Calu3 (cell line): ENCODE measurements at regions of chr3 and their contacts with region 1.

Region 1: DNA sequence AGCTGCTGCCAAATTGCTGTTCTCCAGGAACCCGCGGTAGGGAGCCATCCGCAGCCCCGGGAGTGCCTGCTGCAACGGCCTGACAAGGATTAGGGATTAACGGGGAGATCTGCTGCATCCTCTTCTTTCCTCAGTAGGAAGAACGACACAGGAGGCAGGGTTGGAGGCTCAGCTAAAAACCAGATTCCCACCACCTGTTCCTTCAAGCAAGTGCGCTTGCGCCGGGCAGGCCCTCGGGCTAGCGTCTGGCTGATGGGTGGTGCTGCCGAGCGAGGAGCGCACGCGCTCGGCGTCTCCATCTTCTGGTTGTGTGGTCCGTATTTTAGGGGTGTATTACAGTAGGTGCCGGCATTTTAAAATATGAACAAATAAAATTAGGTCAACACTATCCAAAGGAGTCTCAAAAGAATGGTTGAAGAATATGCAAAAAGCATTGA is 25.4 kb upstream of the SLC25A26 start:
- DNase-seq: peak; percentile 77
- H3K4me3 Mint-ChIP-seq: peak overlapping the region; percentile 66
- H3K27ac Mint-ChIP-seq: no peak overlapping the region
- H3K4me1 Mint-ChIP-seq: no peaks in the 10 kb centered on the region
- H3K27me3 Mint-ChIP-seq: no peaks in the 10 kb centered on the region
- CTCF ChIP-seq: no peak

Region 2: GRCh38 chr3:65342084-65342683 is 853.2 kb before region 1 on chr3:
- CTCF ChIA-PET with region 1: no interaction called
- intact Hi-C with region 1: loop called (anchors 1 kb)
- DNase-seq: peak; percentile 72
- H3K4me3 Mint-ChIP-seq: no peak overlapping the region
- H3K27ac Mint-ChIP-seq: no peak overlapping the region
- H3K4me1 Mint-ChIP-seq: no peaks in the 10 kb centered on the region
- H3K27me3 Mint-ChIP-seq: no peaks in the 10 kb centered on the region
- CTCF ChIP-seq: peak; percentile 75

Region 3: DNA sequence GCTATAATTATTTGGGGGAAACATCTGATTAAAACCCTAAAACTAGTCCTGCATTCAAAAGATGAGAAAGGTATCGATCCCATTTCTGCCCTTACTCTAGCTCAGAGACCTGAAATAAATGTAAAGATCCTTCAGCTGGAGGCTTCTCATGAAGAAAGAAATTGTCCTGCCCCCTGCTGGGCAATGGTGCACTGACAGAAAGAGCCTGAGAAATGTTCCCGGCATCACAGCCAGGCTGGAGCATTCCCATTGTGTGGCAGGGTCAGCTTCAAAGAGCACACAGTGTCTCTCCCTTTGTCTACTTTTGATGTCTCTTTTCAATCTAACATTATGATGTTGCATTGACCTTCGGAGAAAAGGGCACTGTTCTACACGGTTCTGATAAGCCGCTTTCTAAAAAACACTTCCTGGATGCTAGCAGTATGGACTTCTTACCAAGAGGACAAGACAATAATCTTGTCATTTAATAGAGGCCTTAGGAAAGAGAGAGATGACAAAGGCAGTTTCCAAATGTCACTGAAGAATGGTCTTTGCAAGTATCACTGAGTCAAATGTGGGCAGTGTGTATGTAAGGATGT is 444.2 kb before region 1 on chr3:
- CTCF ChIA-PET with region 1: interaction called, 3 read pairs
- intact Hi-C with region 1: loop called (anchors 10 kb)
- DNase-seq: peak; percentile 61
- H3K4me3 Mint-ChIP-seq: no peak overlapping the region
- H3K27ac Mint-ChIP-seq: no peak overlapping the region
- H3K4me1 Mint-ChIP-seq: no peaks in the 10 kb centered on the region
- H3K27me3 Mint-ChIP-seq: no peaks in the 10 kb centered on the region
- CTCF ChIP-seq: peak; percentile 71

Region 4: GRCh38 chr3:65927549-65927948 is 267.8 kb before region 1 on chr3:
- CTCF ChIA-PET with region 1: no interaction called
- intact Hi-C with region 1: no loop called
- DNase-seq: peak; percentile 69
- H3K4me3 Mint-ChIP-seq: peak overlapping the region; percentile 65
- H3K27ac Mint-ChIP-seq: peak overlapping the region; percentile 93
- H3K4me1 Mint-ChIP-seq: peaks cover 61% of the 10 kb centered on the region
- H3K27me3 Mint-ChIP-seq: no peaks in the 10 kb centered on the region
- CTCF ChIP-seq: no peak

Region 5: DNA sequence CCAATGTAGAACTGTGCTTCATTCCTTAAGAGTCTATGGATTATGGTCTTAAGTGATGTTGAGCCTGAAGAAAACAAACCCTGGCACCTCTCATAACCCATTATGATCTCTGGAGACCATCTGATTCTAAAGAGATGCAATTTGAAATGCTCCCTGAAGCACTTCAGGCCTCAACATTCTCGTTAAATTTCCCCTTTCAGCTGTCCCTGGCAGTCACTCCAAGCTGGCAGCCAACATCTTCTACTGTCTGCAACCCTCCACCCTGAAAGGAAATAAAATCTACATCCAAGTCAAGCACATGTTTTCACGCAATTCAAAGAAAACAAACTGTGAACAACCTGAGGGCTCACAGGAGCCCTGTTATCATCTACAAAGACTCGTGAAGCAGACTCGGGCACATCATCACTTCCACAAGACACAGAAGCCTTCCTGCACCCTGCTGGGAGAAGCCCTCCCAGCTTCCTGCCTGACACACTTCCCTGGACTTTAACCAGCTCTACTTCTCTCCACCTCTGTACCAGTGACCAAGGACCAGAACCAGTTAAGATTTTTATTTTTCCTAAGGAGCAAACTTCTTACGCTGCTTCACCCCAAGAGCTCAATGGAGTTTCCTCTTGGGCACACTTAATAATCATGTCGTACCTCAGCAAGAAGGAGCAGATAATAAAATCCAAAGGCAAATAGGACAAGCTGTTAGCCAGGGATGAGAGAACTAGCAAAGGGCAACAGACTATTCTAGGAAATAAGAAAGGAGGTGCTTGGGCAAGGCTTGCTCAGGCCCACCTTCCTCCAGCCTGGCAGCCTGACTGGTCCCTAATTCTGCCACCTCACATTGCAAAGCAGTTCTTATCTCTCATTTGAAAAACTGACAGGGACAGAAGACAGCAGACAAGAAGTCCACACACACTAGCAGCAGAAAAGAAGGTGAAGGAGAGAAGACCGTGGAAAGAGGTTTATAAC is 223.8 kb before region 1 on chr3:
- CTCF ChIA-PET with region 1: no interaction called
- intact Hi-C with region 1: no loop called
- DNase-seq: no peak
- H3K4me3 Mint-ChIP-seq: no peak overlapping the region
- H3K27ac Mint-ChIP-seq: no peak overlapping the region
- H3K4me1 Mint-ChIP-seq: peaks cover 39% of the 10 kb centered on the region
- H3K27me3 Mint-ChIP-seq: no peaks in the 10 kb centered on the region
- CTCF ChIP-seq: no peak

Region 6: DNA sequence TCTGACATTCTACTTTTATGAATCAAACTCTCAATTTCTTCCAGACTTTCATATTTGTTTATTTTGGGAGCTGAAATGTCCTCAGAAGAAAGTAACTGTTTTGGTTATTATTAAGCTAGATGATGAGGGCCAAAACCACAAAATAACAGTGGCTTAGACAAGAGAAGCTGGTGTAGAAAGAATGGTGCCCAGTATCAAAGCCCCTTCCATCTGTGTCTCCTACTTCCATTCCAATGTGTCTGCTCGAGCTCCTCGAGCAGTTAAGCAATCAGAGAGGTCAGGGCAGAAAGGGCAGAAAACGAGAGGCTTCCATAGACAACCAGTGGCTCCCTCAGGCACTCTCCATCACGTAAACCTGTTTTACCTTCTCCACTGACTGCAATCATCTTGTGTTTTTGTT is 96.9 kb before region 1 on chr3:
- CTCF ChIA-PET with region 1: no interaction called
- intact Hi-C with region 1: no loop called
- DNase-seq: no peak
- H3K4me3 Mint-ChIP-seq: no peak overlapping the region
- H3K27ac Mint-ChIP-seq: no peak overlapping the region
- H3K4me1 Mint-ChIP-seq: peaks cover 14% of the 10 kb centered on the region
- H3K27me3 Mint-ChIP-seq: no peaks in the 10 kb centered on the region
- CTCF ChIP-seq: no peak

Region 7: DNA sequence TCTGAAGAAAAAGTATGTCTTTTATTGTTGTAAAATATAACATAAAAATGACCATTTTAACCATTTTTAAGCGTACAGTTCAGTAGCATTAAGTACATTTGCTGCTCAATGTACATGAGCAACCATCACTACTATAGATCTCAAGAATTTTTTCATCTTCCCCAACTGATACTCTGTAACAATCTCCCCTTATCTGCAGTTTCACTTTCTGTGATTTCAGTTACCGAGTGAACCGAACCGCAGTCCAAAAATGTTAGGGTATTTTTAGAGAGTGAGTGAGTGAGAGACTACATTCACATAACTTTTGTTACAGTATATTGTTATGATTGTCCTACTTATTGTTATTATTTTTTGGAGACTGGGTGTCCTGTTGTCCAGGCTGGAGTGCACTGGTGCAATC is 16.4 kb after region 1 on chr3:
- CTCF ChIA-PET with region 1: no interaction called
- intact Hi-C with region 1: no loop called
- DNase-seq: no peak
- H3K4me3 Mint-ChIP-seq: no peak overlapping the region
- H3K27ac Mint-ChIP-seq: no peak overlapping the region
- H3K4me1 Mint-ChIP-seq: no peaks in the 10 kb centered on the region
- H3K27me3 Mint-ChIP-seq: no peaks in the 10 kb centered on the region
- CTCF ChIP-seq: no peak